Naive thymus-derived CD8-positive, alpha-beta T cell (primary cell): ENCODE measurements at regions of chr17 and their contacts with region 1.

Region 1: DNA sequence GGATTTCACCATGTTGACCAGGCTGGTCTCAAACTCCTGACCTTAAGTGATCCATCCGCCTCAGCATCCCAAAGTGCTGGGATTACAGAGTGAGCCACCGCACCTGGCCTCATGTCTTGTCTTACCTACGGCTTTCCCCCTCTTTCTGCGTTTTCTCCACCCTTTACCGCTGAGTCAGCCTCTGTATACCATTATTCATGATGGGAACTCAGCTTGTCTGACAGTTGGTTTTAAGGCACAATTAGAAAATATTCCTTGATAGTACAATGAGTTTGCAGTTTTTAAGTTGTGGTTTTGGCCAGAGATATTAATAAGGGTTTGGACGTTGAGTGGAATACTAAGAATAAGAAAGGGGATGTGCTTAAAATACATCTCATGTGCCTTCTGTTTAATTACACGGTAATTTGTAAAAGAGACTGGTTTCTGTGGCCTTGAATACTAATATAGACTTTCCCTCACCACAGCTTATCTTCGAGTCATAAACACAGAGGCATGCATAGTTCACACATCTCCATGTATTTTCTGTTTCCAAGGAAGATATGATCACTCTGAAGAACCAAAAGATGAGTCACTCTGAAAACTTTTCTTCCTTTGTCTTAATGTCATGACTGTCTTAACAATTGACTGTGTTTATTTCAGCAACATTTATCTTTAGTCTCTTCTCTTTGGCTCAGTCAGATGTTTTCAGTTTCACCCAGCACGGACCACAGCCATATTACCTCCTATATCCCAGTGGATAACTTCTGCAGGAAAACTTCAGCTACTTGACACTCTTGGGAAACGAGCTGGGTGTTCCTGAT is 54.4 kb downstream of the PITPNC1 start:
- DNase-seq: no peak
- ATAC-seq: peak in 1 of 2 donors; percentile 4
- H3K4me3 Mint-ChIP-seq: peak overlapping the region in 5 of 10 donors; percentile 1 to 36 (median 21)
- H3K27ac Mint-ChIP-seq: peak overlapping the region; percentile 63 to 93 (median 88)
- H3K4me1 Mint-ChIP-seq: peaks cover 31 to 82% (median 70%) of the 10 kb centered on the region in 4 donors
- H3K27me3 Mint-ChIP-seq: no peaks in the 10 kb centered on the region

Region 2: DNA sequence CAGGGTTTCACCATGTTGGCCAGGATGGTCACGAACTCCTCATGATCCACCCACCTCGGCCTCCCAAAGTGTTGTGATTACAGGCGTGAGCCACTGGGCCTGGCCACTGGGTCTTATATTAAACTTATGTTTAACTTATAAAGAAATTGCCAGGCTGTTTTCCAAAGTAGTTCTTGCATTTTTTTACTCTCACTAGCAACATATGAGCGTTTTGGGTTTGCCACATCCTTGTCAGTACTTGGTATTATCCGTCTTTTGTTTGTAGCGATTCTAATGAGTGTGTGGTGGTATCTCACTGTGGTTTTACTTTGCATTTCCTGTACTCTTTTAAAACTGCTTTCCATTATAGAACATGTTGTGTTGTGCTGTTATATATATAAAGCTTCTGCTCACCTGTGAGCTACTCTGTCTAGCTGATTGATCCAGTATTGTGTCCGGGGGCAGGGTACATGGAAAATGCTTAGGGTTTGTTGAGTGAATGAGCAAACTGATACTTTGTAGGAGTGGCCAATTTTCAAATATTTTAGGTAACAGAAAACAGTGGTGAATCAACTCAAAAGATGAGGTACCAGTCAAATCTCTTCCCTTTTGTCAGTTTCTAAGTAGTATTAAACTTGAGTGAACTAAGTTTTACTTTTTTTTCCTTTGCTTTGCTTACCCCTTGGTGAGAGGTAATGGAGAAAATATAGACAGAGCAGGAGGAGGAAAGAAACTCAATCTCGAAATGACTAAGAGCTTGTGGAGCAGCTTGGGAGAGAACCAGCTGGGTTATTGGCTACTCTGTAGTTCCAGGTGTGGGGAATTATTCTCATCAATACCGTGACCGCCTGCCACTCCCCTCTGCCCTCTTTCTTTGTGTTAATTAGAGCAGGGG is 21.5 kb after region 1 on chr17:
- POLR2A ChIA-PET with region 1: interaction called, 28 read pairs
- DNase-seq: peak in 4 of 10 donors; percentile 59 to 84 (median 75)
- ATAC-seq: peak; percentile 80 to 93
- H3K4me3 Mint-ChIP-seq: peak overlapping the region; percentile 63 to 88 (median 78)
- H3K27ac Mint-ChIP-seq: peak overlapping the region; percentile 89 to 100 (median 96)
- H3K4me1 Mint-ChIP-seq: peaks cover 32 to 97% (median 89%) of the 10 kb centered on the region in 4 donors
- H3K27me3 Mint-ChIP-seq: no peaks in the 10 kb centered on the region